ENCODE measurements at regions of chr4 and their contacts with region 1.

Region 1: DNA sequence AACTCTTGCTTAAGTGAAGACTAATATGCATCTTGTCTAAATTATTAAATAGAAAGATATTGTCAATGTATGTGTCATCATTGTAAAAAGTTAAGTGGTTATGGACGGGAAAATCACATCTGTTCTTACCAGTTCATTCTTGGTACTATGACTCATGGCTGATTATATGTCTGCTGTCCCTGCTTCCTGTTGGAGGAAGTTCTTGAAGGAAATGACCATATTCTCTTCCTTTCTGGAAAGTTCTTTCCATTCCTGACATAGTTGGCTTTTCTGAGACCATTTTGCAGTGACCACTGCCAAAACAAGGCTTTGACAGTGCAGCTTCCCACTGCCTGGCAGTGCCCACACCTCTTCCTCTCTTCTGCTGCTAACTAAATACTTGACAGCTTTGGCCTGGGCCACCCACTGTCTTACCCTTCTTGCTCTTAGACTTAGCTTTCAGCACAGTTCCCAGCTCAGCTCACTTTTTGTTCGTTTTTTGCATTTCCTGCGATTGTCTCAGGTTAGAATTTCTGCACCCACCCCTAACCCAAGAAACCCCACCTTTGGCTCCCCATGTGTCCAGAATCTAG is 13.2 kb upstream of the CLDN24 start:
- DNase-seq: no peak
- H3K4me3 Mint-ChIP-seq: no peak overlapping the region
- H3K27ac Mint-ChIP-seq: peak overlapping the region; percentile 79
- H3K4me1 Mint-ChIP-seq: peaks cover 45% of the 10 kb centered on the region
- H3K27me3 Mint-ChIP-seq: no peaks in the 10 kb centered on the region
- CTCF ChIP-seq: no peak

Region 2: GRCh38 chr4:183106839-183107238 is 228.6 kb before region 1 on chr4:
- CTCF ChIA-PET with region 1: no interaction called
- intact Hi-C with region 1: no loop called
- DNase-seq: no peak
- H3K4me3 Mint-ChIP-seq: no peak overlapping the region
- H3K27ac Mint-ChIP-seq: no peak overlapping the region
- H3K4me1 Mint-ChIP-seq: peaks cover 33% of the 10 kb centered on the region
- H3K27me3 Mint-ChIP-seq: no peaks in the 10 kb centered on the region
- CTCF ChIP-seq: no peak

Region 3: DNA sequence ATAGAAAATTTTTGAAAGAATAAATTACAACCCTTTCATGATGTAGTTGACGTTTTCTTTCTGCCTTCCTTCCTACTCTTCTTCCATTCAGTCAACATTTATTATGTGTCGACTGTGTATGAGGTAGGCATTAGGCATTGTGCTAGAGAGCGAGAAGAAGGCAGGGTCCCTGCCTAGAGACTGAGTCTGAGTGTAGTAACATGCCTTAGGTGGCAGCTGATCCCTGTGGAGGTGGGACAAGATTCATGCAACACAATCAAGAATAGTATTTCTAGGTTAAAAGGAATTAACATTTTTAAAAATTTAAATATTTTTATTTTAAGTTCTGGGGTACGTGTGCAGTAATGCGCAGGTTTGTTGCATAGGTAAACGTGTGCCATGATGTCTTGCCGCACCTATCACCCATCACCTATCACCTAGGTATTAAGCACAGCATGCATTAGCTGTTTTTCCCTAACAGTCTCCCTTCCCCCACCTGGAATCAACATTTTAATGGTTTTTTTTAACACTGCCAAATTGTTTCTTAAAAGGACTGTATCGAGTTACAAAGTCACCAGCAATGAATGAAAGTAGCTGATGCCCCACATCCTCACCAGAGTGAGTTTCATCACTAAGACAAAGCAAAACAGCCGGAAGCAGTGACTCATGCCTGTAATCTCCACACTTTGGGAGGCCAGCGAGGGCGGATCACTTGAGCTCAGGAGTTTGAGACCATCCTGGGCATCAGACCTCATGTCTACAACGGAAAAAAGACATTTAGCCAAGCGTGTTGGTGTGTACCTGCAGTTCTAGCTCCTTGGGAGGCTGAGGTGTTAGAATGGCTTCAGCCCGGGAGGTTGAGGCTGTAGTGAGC is 152.4 kb before region 1 on chr4:
- CTCF ChIA-PET with region 1: no interaction called
- intact Hi-C with region 1: no loop called
- DNase-seq: peak; percentile 61
- H3K4me3 Mint-ChIP-seq: no peak overlapping the region
- H3K27ac Mint-ChIP-seq: no peak overlapping the region
- H3K4me1 Mint-ChIP-seq: peaks cover 34% of the 10 kb centered on the region
- H3K27me3 Mint-ChIP-seq: no peaks in the 10 kb centered on the region
- CTCF ChIP-seq: no peak

Region 4: GRCh38 chr4:183287309-183287659 is 48.2 kb before region 1 on chr4:
- CTCF ChIA-PET with region 1: no interaction called
- intact Hi-C with region 1: loop called (anchors 10 kb)
- DNase-seq: no peak
- H3K4me3 Mint-ChIP-seq: peak overlapping the region; percentile 47
- H3K27ac Mint-ChIP-seq: peak overlapping the region; percentile 65
- H3K4me1 Mint-ChIP-seq: peaks cover 44% of the 10 kb centered on the region
- H3K27me3 Mint-ChIP-seq: no peaks in the 10 kb centered on the region
- CTCF ChIP-seq: no peak

Region 5: DNA sequence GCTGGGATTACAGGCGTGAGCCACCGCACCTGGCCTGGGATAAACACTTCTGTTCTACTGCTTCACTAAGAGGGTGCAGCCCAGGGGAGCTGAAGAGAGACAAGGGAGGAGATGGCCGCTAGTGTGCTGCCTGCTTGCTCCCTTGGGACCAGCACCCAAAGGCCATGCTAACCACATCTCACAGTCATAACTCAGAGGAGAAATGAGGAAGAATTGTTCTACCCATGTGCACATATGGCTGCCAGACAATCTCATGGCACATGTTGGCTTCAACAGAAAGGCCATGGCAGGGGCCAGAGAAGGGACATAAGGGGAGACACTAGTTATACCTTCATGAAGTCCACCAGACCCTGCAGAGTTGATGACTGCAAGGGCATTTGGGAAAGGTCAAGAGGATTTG is 37.8 kb before region 1 on chr4:
- CTCF ChIA-PET with region 1: no interaction called
- intact Hi-C with region 1: no loop called
- DNase-seq: no peak
- H3K4me3 Mint-ChIP-seq: no peak overlapping the region
- H3K27ac Mint-ChIP-seq: no peak overlapping the region
- H3K4me1 Mint-ChIP-seq: no peaks in the 10 kb centered on the region
- H3K27me3 Mint-ChIP-seq: no peaks in the 10 kb centered on the region
- CTCF ChIP-seq: no peak

Region 6: GRCh38 chr4:183747931-183748670 is 412.6 kb after region 1 on chr4:
- CTCF ChIA-PET with region 1: no interaction called
- intact Hi-C with region 1: no loop called
- DNase-seq: no peak
- H3K4me3 Mint-ChIP-seq: no peak overlapping the region
- H3K27ac Mint-ChIP-seq: no peak overlapping the region
- H3K4me1 Mint-ChIP-seq: no peaks in the 10 kb centered on the region
- H3K27me3 Mint-ChIP-seq: no peaks in the 10 kb centered on the region
- CTCF ChIP-seq: no peak